Lower leg skin (tissue), 4 donors: ENCODE measurements at regions of chr4 and their contacts with region 1.

Region 1: DNA sequence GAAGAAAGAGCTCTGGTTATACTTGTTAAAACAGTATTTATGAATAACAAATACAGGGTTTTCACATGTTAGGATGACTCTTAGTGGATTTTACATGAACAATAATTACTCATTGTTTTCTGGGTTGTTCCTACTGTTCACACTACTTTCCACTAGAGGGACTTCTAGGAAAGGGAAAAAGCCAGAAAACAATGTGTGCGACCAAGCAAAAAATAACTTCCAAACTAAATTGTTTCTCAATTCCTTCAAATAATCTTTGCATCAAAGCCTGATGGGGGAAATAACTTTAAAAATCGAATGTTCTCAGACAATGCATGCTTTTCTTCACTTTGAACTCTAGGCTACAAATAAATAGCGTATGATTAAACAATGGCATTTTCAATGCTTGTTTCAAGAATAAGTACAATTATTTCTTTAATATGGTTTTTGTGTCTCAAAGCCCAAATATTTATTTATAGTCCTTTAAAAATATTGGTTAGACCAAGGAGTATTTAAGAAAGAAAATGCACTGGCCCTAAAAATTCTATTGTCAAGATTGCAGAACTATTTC is 72.1 kb upstream of the ETNPPL start:
- DNase-seq: no peak
- H3K4me3 ChIP-seq: no peak overlapping the region
- CTCF ChIP-seq: no peak
- POLR2A ChIP-seq: no peak

Region 2: GRCh38 chr4:108902769-108903168 is 67.9 kb after region 1 on chr4:
- intact Hi-C with region 1: no loop called
- DNase-seq: no peak
- H3K4me3 ChIP-seq: no peak overlapping the region
- CTCF ChIP-seq: no peak
- POLR2A ChIP-seq: no peak

Region 3: DNA sequence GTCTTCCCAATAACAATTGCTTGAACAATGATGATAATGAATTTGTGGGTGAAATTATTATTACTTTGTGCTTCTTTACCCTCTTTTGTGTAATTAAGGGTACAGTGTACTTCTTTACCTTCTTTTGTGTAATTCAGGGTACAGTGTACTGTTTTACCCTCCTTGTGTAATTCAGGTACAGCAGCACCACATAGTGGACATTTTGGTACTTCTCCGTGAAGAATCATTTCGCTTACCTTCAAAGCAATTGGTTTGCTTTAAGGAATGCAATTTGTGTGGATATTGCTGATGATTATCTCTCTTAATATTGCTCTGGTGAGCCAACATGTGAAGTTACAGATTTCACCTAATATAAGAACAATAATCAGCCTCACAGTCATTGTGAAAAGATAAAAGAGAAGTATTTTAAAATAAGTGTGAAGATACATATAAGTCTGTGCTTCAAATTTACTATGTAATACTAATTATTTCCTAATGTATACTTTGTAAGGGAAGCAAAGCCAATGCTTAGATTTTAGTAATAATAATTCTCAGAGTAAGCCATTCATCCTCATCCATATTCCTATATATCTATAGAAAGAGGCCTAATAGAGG is 571.5 kb after region 1 on chr4:
- intact Hi-C with region 1: loop called (anchors 10 kb)
- DNase-seq: no peak
- H3K4me3 ChIP-seq: no peak overlapping the region
- CTCF ChIP-seq: no peak
- POLR2A ChIP-seq: no peak

Region 4: GRCh38 chr4:109648266-109648996 is 813.5 kb after region 1 on chr4:
- intact Hi-C with region 1: no loop called
- DNase-seq: no peak
- H3K4me3 ChIP-seq: no peak overlapping the region
- CTCF ChIP-seq: no peak
- POLR2A ChIP-seq: no peak